Gastrocnemius medialis (tissue), 4 donors: ENCODE measurements at regions of chr20 and their contacts with region 1.

Region 1: GRCh38 chr20:62937366-62938104 is 412 bp upstream of the GID8 start:
- DNase-seq: peak; percentile 93 to 96
- ATAC-seq: peak; percentile 90 to 91
- H3K4me3 ChIP-seq: peak overlapping the region; percentile 84 to 99 (median 92)
- H3K27ac ChIP-seq: peak overlapping the region; percentile 88 to 98 (median 94)
- H3K4me1 ChIP-seq: peaks cover 31 to 42% of the 10 kb centered on the region in 2 donors
- H3K27me3 ChIP-seq: no peaks in the 10 kb centered on the region
- CTCF ChIP-seq: peak in 1 of 5 experiments; percentile 10
- POLR2A ChIP-seq: peak; percentile 77 to 91

Region 2: DNA sequence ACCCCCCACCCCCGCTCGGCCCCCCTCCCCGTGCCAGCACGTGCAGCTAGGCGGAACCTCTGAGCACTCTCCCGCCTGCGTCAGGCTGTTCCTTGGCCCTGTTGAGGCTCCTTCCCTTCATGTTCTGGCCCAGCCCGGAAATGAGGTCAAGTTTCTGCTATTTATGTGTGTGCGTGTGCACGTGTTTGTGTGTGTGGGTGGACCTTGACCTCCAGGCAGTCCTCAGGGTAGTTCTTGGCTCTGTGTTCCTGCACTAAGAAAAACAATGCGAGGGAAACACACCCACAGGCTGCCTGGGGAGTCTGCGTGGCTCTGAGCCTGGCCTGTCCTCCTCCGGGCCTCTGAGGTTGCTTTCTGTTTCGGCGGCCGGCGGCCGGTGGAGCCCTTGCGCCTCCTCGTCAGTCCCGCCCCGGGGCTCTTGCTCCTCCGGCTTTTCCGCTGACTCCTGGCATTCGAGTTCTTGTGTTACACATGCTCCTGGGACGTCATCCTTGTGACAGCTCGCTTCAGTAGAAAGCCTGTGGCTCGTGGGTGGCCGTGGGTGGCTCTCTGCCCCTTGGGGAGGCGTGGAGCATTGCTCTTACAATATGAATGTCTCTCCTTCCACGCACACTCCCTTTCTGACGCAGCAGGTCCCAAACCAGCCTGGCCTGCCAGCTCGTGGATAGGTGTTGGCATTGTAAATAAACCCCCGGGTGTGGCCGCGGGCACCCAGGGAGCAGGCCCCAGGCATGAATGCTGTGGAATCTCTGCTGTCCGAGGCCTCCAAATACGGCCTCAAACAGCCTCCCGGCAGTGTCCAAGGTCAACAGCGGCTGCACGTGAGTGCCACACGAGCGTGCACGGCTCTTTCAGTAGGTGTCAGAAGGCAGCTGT is 285.2 kb before region 1 on chr20:
- in situ Hi-C with region 1: no loop called
- intact Hi-C with region 1: loop called (anchors 5 kb)
- DNase-seq: peak; percentile 91 to 95
- ATAC-seq: peak; percentile 75 to 77
- H3K4me3 ChIP-seq: peak overlapping the region; percentile 32 to 53 (median 46)
- H3K27ac ChIP-seq: peak overlapping the region; percentile 87 to 95 (median 94)
- H3K4me1 ChIP-seq: peaks cover 30 to 42% of the 10 kb centered on the region in 2 donors
- H3K27me3 ChIP-seq: no peaks in the 10 kb centered on the region
- CTCF ChIP-seq: peak in 2 of 5 experiments; percentile 30 to 47
- POLR2A ChIP-seq: peak; percentile 76 to 86

Region 3: DNA sequence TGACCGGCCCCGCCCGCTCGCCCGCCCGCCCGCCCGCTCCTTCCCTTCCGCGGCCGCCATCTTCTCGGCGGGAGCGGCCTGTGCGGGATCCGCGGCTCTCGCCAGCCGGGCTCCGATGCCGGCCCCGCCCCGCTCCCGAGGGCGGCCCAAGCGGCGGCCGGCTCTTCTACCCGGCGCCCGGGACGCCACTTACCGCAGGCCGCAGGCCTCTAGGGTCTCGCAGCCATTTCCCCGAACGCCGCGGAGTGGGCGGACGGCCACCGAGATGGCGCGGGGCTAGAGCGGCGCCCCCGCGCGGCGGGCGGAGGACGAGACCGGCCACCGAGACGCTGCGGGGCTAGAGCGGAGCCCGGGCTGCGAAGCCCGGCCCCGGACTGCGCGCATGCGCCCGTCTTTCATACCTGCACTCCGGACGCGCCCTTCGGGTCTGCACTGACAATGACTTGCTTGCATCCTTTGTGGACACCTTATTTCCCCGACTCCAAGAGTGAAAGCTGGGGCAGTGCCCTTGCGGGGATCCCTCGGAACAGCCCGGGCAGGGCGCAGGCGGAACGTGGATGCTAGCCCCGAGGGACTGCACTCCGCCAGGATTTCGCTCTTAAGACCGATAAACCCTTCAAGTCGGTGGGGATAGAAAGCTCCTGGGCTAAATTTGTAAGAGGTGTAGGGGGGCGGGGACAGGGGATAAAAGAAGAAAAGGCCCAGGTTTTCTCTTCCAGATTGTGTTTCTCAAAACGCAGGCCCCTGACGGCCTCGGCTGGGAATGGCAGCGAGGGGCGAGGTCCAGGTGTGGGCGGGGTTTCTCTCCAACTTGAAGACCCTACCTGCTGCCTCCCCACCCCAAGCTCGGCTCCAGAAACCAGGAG is 11.1 kb before region 1 on chr20 and contains the start of gene DIDO1:
- in situ Hi-C with region 1: no loop called
- intact Hi-C with region 1: loop called (anchors 1 kb)
- DNase-seq: peak; percentile 78 to 82
- ATAC-seq: peak; percentile 73 to 83
- H3K4me3 ChIP-seq: peak within 1 kb of the TSS; percentile 82 to 94 (median 86)
- H3K27ac ChIP-seq: peak within 1 kb of the TSS; percentile 91 to 98 (median 94)
- H3K4me1 ChIP-seq: peaks cover 66 to 72% of the 10 kb centered on the region in 2 donors
- H3K27me3 ChIP-seq: no peaks in the 10 kb centered on the region
- CTCF ChIP-seq: peak; percentile 66 to 85 (median 83)
- POLR2A ChIP-seq: peak; percentile 73 to 85
- total RNA-seq, gene DIDO1: 24.2 to 39.3 (median 28.7) TPM